ENCODE measurements at regions of chr5 and their contacts with region 1.

Region 1: DNA sequence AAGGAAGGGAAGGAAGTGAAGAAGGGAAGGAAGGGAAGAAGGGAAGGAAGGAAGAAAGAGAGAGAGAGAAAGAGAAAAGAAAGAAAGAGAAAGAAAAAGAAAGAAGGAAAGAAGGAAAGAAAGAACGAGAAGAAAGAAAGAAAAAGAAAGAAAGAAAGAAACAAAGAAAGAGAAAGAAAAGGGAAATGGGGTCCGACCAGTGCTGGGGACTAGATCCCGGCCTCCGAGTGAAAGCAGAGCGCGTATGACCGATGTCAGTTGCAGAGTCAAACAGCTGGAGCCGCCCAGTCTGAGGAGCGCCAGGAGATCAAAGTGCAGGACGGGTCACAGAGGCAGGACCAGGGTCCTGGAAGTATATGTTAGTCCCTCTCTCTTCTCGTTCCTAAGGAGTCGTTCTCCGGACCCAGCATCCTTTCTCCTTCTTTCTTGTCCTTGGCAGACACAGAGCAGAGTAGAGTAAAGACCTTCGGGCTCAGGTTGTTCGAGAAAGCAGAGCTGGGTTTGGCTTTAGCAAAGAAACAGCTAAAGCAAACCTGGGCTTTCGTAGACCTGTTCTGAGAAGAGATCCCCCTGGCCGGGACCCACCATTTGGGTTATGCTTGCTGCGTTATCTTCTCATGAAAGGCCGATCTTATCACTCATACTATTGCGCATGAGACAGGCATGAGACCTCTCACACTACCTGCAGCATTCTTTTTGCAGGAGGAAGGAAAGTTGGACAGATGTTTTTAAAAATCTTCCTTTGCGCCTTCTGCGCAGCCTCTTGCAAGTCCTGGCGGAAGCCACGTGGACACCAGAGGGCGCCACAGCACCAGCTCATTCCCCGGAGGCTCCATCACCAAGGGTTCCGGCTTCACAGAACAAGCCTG is 305.2 kb upstream of the MSX2 start:
- DNase-seq: peak; percentile 87
- H3K4me3 Mint-ChIP-seq: peak overlapping the region; percentile 43
- H3K27ac Mint-ChIP-seq: no peak overlapping the region
- H3K4me1 Mint-ChIP-seq: peaks cover 13% of the 10 kb centered on the region
- H3K27me3 Mint-ChIP-seq: peaks cover 12% of the 10 kb centered on the region
- CTCF ChIP-seq: peak; percentile 93

Region 2: GRCh38 chr5:174045470-174046025 is 373.6 kb before region 1 on chr5 and contains the start of gene NSG2:
- CTCF ChIA-PET with region 1: interaction called, 5 read pairs
- POLR2A ChIA-PET with region 1: no interaction called
- intact Hi-C with region 1: loop called (anchors 10 kb)
- DNase-seq: peak; percentile 96
- H3K4me3 Mint-ChIP-seq: no peak within 1 kb of the TSS
- H3K27ac Mint-ChIP-seq: no peak within 1 kb of the TSS
- H3K4me1 Mint-ChIP-seq: no peaks in the 10 kb centered on the region
- H3K27me3 Mint-ChIP-seq: peaks cover 42% of the 10 kb centered on the region
- CTCF ChIP-seq: peak; percentile 99
- total RNA-seq, gene NSG2: not detected in 2 replicates

Region 3: DNA sequence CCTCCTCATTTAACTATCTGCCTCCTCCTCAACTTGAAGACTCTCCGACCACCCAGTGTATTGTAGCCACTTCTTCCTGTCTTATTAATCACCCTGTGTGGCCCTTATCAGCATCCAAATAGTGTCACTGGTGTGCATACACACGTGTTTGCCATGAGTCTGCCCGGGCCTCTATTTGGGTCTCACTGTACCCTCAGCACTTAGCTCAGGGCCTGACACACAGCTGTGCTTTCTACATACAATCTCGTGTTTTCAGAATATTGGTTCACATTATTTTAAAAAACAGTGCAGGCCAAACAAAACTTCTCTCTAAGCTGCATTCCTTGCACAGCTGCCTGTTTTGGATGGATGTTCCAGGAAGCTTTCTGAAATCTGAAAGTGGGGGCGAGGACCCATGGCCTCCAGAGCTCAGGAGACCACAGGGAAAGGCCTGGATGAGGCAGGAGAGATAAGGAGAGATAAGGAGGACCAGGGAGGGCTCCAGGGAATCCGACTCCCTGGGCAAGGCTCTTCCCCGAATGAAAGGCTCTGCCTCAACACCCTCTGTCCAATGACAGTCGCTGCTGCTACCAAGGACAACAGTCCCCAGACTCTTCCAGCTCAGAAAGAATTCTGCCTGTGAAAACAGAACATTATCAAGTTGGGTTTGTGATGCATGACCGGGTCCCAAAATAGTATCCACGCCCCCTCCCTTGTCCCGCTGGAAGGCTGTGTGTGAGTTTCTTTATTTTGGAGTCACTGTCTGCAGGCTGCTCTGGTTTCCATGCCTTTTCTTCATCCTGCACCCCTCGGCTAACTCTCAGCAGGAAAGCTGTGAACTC is 118.0 kb before region 1 on chr5:
- CTCF ChIA-PET with region 1: no interaction called
- POLR2A ChIA-PET with region 1: no interaction called
- intact Hi-C with region 1: no loop called
- DNase-seq: no peak
- H3K4me3 Mint-ChIP-seq: no peak overlapping the region
- H3K27ac Mint-ChIP-seq: no peak overlapping the region
- H3K4me1 Mint-ChIP-seq: no peaks in the 10 kb centered on the region
- H3K27me3 Mint-ChIP-seq: peaks cover 43% of the 10 kb centered on the region
- CTCF ChIP-seq: no peak

Region 4: GRCh38 chr5:174431504-174431903 is 12.3 kb after region 1 on chr5:
- CTCF ChIA-PET with region 1: interaction called, 45 read pairs
- POLR2A ChIA-PET with region 1: interaction called, 3 read pairs
- intact Hi-C with region 1: no loop called
- DNase-seq: peak; percentile 29
- H3K4me3 Mint-ChIP-seq: no peak overlapping the region
- H3K27ac Mint-ChIP-seq: no peak overlapping the region
- H3K4me1 Mint-ChIP-seq: no peaks in the 10 kb centered on the region
- H3K27me3 Mint-ChIP-seq: no peaks in the 10 kb centered on the region
- CTCF ChIP-seq: no peak

Region 5: GRCh38 chr5:174511765-174512164 is 92.6 kb after region 1 on chr5:
- CTCF ChIA-PET with region 1: no interaction called
- POLR2A ChIA-PET with region 1: no interaction called
- intact Hi-C with region 1: no loop called
- DNase-seq: peak; percentile 86
- H3K4me3 Mint-ChIP-seq: no peak overlapping the region
- H3K27ac Mint-ChIP-seq: no peak overlapping the region
- H3K4me1 Mint-ChIP-seq: peaks cover 8% of the 10 kb centered on the region
- H3K27me3 Mint-ChIP-seq: no peaks in the 10 kb centered on the region
- CTCF ChIP-seq: no peak

Region 6: DNA sequence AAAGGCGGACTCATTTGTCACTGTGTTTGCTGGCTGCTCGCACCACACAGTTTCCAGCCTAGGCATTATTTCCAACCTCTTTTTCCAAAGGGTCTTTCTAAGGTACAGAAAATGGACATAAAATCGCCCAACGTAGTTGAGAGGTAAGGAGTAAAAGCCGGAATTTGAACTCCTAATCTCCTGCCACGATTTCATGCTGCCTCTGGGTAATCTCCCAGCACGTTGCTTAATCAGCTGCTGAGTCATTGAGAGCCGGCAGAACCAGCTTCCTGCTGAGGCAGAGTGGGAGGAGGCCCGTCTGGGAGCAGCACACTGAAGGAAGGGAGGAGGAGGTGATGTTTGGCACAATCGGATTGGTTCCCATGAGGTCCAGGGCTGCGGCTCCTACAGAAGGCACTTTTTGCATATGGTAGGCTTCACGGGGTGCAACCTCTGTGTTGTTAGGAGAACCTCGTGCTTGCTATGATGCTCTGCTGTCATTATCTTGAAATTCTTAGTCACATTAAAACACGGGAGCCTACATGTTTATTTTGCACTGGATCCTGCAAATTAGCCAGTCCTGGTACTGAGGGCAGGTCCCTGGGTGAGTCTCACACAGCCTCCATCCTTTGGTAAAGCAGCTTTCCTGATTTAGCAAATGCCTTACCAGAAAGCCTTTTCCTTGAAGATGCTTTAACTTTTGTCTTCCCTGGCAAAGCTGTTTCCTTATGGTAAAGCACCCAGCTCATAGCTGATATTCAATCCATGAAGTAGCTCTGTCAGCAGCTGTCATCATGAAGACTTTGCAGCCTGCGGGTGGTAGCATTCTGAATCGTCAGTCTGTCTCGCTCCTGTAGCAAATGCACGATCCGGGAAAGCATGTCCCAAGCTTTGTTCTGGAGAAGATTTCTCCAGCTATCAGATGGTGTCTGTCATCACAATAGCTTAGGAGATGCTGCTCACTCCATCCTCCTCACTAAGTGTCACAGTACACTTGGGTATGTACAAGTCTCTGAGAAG is 113.6 kb after region 1 on chr5:
- CTCF ChIA-PET with region 1: interaction called, 4 read pairs
- POLR2A ChIA-PET with region 1: interaction called, 4 read pairs
- intact Hi-C with region 1: loop called (anchors 2 kb)
- DNase-seq: peak; percentile 99
- H3K4me3 Mint-ChIP-seq: peak overlapping the region; percentile 13
- H3K27ac Mint-ChIP-seq: peak overlapping the region; percentile 40
- H3K4me1 Mint-ChIP-seq: peaks cover 46% of the 10 kb centered on the region
- H3K27me3 Mint-ChIP-seq: no peaks in the 10 kb centered on the region
- CTCF ChIP-seq: no peak

Region 7: DNA sequence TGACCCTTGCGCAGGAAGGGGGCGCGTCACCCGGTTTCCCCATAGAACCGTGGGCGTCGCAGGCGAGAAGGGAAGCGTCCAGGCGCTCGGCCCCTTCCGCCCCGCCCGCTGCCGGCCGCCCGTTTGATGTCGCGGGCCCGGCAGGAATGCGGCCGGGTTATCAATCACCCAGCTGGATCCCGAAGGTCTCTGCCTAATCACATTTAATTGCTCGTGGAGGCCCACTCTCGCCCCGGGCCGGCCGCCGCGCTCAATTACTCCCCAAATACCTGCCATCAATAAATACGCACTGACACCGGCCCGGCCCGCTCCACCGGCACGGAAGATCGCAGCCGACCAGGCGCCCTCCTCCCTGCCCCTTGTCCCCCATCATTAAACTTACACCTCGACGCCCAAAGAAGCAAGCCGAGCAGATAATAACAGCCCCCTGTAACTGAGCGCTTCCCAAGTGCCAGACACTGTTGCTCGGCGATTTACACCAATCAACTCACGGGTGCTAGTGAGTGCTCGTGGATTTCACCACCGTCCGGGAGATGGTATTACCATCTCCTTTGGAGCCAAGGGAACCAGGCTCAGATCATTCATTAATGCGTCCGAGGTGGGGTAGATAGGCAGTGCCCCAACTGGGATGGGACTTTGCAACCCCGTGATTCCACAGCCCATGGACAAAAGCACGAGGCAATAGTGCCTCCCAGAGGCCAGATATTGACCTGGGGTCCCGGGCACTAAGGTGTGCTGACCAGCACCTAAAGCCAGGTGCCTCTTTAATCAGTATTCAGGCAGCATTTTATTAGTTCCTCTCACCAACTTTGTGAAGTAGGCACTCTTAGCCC is 316.6 kb after region 1 on chr5:
- CTCF ChIA-PET with region 1: interaction called, 34 read pairs
- POLR2A ChIA-PET with region 1: interaction called, 3 read pairs
- intact Hi-C with region 1: loop called (anchors 1 kb)
- DNase-seq: peak; percentile 63
- H3K4me3 Mint-ChIP-seq: peak overlapping the region; percentile 65
- H3K27ac Mint-ChIP-seq: no peak overlapping the region
- H3K4me1 Mint-ChIP-seq: peaks cover 20% of the 10 kb centered on the region
- H3K27me3 Mint-ChIP-seq: peaks cover 19% of the 10 kb centered on the region
- CTCF ChIP-seq: peak; percentile 74

Region 8: GRCh38 chr5:174759091-174759490 is 339.9 kb after region 1 on chr5:
- CTCF ChIA-PET with region 1: interaction called, 76 read pairs
- POLR2A ChIA-PET with region 1: interaction called, 4 read pairs
- intact Hi-C with region 1: no loop called
- DNase-seq: no peak
- H3K4me3 Mint-ChIP-seq: no peak overlapping the region
- H3K27ac Mint-ChIP-seq: no peak overlapping the region
- H3K4me1 Mint-ChIP-seq: no peaks in the 10 kb centered on the region
- H3K27me3 Mint-ChIP-seq: no peaks in the 10 kb centered on the region
- CTCF ChIP-seq: no peak

Region 9: DNA sequence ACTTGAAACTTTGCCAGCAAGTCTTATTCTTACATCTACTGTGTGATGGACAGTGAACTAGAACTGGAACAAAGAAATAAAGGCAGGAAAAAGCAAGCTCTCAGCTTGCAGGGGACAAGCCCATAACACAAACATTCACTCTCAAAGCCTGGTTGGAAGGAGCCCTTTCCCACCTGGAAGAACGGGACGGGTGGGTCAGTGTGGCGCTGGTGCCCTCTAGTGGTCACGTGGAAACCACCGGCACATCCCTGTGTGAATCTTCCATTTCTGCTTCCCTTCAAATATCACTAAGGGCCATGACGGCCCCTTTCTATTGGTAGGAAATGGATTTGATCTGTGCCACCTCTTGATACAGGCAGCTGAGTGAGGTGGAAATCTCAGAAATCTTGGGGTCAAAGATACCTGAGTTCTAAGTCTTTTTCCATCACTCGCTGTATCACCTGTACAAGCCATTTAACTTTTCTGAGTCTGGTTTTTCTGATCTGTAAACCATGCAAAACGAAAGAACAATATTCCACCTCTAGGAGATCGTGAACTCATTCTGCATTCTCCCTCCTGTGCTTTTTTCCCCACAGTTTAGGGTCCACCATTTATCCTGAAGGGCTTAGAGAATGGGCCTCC is 516.8 kb after region 1 on chr5:
- CTCF ChIA-PET with region 1: interaction called, 69 read pairs
- POLR2A ChIA-PET with region 1: interaction called, 3 read pairs
- intact Hi-C with region 1: loop called (anchors 1 kb)
- DNase-seq: peak; percentile 69
- H3K4me3 Mint-ChIP-seq: no peak overlapping the region
- H3K27ac Mint-ChIP-seq: no peak overlapping the region
- H3K4me1 Mint-ChIP-seq: no peaks in the 10 kb centered on the region
- H3K27me3 Mint-ChIP-seq: peaks cover 42% of the 10 kb centered on the region
- CTCF ChIP-seq: peak; percentile 99